ENCODE measurements at regions of chr15 and their contacts with region 1.

Region 1: GRCh38 chr15:64841258-64842095 is at the start of gene PLEKHO2:
- DNase-seq: peak; percentile 99
- ATAC-seq: peak; percentile 93
- H3K4me3 ChIP-seq: peak within 1 kb of the TSS; percentile 58 to 74
- H3K27ac ChIP-seq: peak within 1 kb of the TSS in 1 of 2 donors; percentile 89
- H3K4me1 ChIP-seq: no peaks in the 10 kb centered on the region
- H3K27me3 ChIP-seq: no peaks in the 10 kb centered on the region
- total RNA-seq, gene PLEKHO2: 46.2 to 50.4 TPM

Region 2: GRCh38 chr15:64877435-64877834 is 36.0 kb after region 1 on chr15:
- intact Hi-C with region 1: no loop called
- DNase-seq: peak; percentile 85 to 92
- ATAC-seq: peak; percentile 74
- H3K4me3 ChIP-seq: no peak overlapping the region
- H3K27ac ChIP-seq: no peak overlapping the region
- H3K4me1 ChIP-seq: no peaks in the 10 kb centered on the region
- H3K27me3 ChIP-seq: no peaks in the 10 kb centered on the region

Region 3: DNA sequence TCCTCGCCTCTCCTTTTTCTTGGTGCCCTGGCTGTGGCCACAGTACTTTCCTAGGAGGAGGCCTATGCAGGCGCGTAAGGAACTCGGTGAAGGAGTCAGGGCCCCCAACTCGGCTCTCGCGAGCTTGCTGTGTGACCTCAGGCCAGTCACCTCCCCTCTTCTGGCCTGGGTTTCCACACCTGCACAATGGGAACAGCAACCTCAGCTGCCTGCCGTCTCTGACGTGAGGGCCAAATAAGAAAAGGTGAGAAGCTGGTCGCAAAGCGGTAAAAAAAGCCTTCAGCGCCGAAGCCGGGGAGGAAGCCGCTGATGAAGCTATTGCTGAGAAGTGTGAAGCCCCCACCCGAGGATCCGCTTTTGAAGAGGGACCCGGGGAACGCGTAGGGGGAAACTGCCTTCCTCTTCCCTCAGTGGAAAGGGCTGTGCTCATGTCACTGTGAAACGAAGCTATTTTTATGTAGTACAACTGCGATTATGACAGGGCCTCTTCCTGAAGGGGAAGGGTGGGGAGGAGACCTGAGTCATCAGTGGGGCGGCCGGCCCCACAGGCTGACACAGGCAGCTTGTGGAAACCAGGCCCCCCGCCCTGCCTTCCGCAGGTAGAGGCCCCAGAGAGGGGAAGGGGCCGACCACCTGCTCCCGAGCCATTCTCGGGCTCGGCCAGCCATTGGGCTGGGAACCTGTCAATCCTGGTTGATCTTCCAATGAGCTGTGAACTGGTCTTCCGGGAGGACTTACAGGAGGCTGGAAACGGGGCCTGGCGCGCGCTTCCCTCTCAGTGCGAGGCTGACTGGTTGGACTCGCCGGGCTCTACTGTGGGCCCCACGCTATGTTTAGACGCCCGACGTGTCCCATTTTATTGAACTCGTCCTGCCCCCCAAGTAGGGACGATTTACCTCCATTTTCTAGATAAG is 52.3 kb after region 1 on chr15:
- intact Hi-C with region 1: loop called in 1 of 2 experiments (anchors 5 kb)
- DNase-seq: peak; percentile 96
- ATAC-seq: peak; percentile 91
- H3K4me3 ChIP-seq: no peak overlapping the region
- H3K27ac ChIP-seq: peak overlapping the region in 1 of 2 donors; percentile 6
- H3K4me1 ChIP-seq: peaks cover 0 to 2% of the 10 kb centered on the region in 2 donors
- H3K27me3 ChIP-seq: no peaks in the 10 kb centered on the region

Region 4: GRCh38 chr15:64905119-64905831 is 63.8 kb after region 1 on chr15:
- intact Hi-C with region 1: loop called in 1 of 2 experiments (anchors 1 kb)
- DNase-seq: peak; percentile 87 to 93
- ATAC-seq: peak; percentile 91
- H3K4me3 ChIP-seq: no peak overlapping the region
- H3K27ac ChIP-seq: no peak overlapping the region
- H3K4me1 ChIP-seq: no peaks in the 10 kb centered on the region
- H3K27me3 ChIP-seq: no peaks in the 10 kb centered on the region

Region 5: GRCh38 chr15:64989416-64990167 is 148.1 kb after region 1 on chr15 and contains the start of gene SPG21:
- intact Hi-C with region 1: loop called in 1 of 2 experiments (anchors 10 kb)
- DNase-seq: peak; percentile 97 to 98
- ATAC-seq: peak; percentile 96
- H3K4me3 ChIP-seq: peak within 1 kb of the TSS; percentile 55 to 57
- H3K27ac ChIP-seq: peak within 1 kb of the TSS in 1 of 2 donors; percentile 55
- H3K4me1 ChIP-seq: no peaks in the 10 kb centered on the region
- H3K27me3 ChIP-seq: no peaks in the 10 kb centered on the region
- total RNA-seq, gene SPG21: 58.0 to 77.0 TPM